A673 (cell line): ENCODE measurements at regions of chr11 and their contacts with region 1.

Region 1: GRCh38 chr11:5808500-5809121 is at the start of gene OR52N2:
- DNase-seq: peak; percentile 73
- H3K4me3 ChIP-seq: peak within 1 kb of the TSS; percentile 44
- H3K27ac ChIP-seq: no peak within 1 kb of the TSS
- H3K4me1 ChIP-seq: no peaks in the 10 kb centered on the region
- H3K27me3 ChIP-seq: peaks cover 8% of the 10 kb centered on the region
- CTCF ChIP-seq: peak; percentile 81
- total RNA-seq, gene OR52N2: not detected in 2 replicates

Region 2: GRCh38 chr11:4636962-4637661 is 1171.5 kb before region 1 on chr11 and contains the start of gene OR51D1:
- CTCF ChIA-PET with region 1: no interaction called
- POLR2A ChIA-PET with region 1: no interaction called
- intact Hi-C with region 1: loop called (anchors 2 kb)
- DNase-seq: peak; percentile 74
- H3K4me3 ChIP-seq: no peak within 1 kb of the TSS
- H3K27ac ChIP-seq: no peak within 1 kb of the TSS
- H3K4me1 ChIP-seq: no peaks in the 10 kb centered on the region
- H3K27me3 ChIP-seq: peaks cover 9% of the 10 kb centered on the region
- CTCF ChIP-seq: peak; percentile 83
- total RNA-seq, gene OR51D1: not detected in 2 replicates

Region 3: DNA sequence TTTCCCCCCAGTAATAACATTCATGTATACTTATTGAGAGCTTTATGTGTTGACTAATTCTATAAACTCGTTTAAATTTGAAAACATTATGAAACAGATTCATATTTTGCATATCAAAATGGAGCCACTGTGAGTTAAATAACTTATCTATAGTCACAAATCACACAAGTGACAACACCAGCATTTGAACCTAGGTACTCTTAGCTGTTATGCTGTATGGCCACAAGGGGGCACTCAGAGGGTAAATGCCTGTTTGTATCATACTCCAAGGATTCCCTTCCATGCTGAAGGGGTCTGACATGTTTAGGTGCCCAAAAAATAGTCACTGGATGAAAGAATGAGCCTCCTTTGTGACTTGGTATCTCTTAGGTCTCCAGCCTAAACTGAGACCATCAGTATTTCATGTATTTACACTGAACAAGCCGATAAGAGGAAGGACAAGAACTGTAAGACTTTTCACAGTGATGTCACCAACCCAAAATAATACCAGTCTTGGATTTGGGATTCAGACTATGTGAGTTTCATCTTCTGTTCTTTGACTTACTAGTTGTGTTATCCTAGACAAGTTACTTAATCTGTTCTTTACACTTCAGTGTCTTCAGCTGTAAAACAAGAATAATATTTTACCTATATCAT is 332.3 kb before region 1 on chr11:
- CTCF ChIA-PET with region 1: no interaction called
- POLR2A ChIA-PET with region 1: no interaction called
- intact Hi-C with region 1: loop called (anchors 1 kb)
- DNase-seq: peak; percentile 52
- H3K4me3 ChIP-seq: no peak overlapping the region
- H3K27ac ChIP-seq: no peak overlapping the region
- H3K4me1 ChIP-seq: no peaks in the 10 kb centered on the region
- H3K27me3 ChIP-seq: no peaks in the 10 kb centered on the region
- CTCF ChIP-seq: peak; percentile 79

Region 4: GRCh38 chr11:5600374-5600851 is 208.2 kb before region 1 on chr11:
- CTCF ChIA-PET with region 1: no interaction called
- POLR2A ChIA-PET with region 1: no interaction called
- intact Hi-C with region 1: loop called (anchors 2 kb)
- DNase-seq: peak; percentile 76
- H3K4me3 ChIP-seq: no peak overlapping the region
- H3K27ac ChIP-seq: no peak overlapping the region
- H3K4me1 ChIP-seq: no peaks in the 10 kb centered on the region
- H3K27me3 ChIP-seq: no peaks in the 10 kb centered on the region
- CTCF ChIP-seq: peak; percentile 78